ENCODE measurements at regions of chr5 and their contacts with region 1.

Region 1: DNA sequence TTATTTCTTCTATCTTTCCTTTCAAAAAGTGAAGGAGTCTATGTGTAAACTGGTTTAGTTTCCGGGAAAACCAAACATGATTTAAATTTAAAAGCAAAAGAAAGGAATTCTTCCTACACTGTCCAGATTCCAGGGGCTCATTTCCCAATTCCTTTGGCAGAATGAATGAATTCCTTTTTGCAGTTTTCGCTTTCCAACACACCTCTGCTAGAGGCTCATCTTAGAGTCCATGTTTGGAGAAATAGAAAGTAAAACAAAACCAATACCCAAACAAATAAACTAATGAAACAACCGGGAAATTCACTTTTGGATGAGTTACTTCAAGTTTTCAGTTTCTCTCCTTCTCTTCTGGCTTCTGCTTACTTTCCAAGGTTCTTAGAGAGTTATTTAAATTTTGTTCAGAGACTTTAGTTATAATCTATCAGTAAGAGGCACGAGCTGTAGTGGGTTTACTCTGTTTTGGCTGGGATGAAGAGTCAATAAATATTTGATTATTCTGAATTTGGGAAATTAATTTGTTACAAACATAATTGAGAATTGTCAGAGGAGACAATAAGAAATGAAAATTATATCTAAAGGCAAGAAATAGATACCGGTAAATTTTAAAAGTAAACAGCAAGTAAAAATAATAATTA is 365.0 kb upstream of the CDH9 start:
- DNase-seq: no peak
- ATAC-seq: no peak; the same call in 1 of the 2 replicates
- H3K4me3 ChIP-seq: peak overlapping the region; percentile 26; the same call in 1 of the 2 replicates
- H3K27ac ChIP-seq: no peak overlapping the region
- H3K4me1 ChIP-seq: no peaks in the 10 kb centered on the region
- H3K27me3 ChIP-seq: no peaks in the 10 kb centered on the region
- CTCF ChIP-seq: no peak
- POLR2A ChIP-seq: no peak
- RAD21 ChIP-seq: no peak

Region 2: GRCh38 chr5:27220752-27221151 is 182.6 kb before region 1 on chr5:
- CTCF ChIA-PET with region 1: no interaction called
- POLR2A ChIA-PET with region 1: no interaction called
- dilution Hi-C with region 1: no loop called
- in situ Hi-C with region 1: no loop called
- intact Hi-C with region 1: loop called (anchors 5 kb)
- DNase-seq: no peak
- ATAC-seq: no peak
- H3K4me3 ChIP-seq: no peak overlapping the region
- H3K27ac ChIP-seq: no peak overlapping the region
- H3K4me1 ChIP-seq: no peaks in the 10 kb centered on the region
- H3K27me3 ChIP-seq: no peaks in the 10 kb centered on the region
- CTCF ChIP-seq: no peak
- POLR2A ChIP-seq: no peak
- RAD21 ChIP-seq: no peak

Measured in IMR-90 (cell line).